ENCODE measurements at regions of chr11 and their contacts with region 1.

Region 1: DNA sequence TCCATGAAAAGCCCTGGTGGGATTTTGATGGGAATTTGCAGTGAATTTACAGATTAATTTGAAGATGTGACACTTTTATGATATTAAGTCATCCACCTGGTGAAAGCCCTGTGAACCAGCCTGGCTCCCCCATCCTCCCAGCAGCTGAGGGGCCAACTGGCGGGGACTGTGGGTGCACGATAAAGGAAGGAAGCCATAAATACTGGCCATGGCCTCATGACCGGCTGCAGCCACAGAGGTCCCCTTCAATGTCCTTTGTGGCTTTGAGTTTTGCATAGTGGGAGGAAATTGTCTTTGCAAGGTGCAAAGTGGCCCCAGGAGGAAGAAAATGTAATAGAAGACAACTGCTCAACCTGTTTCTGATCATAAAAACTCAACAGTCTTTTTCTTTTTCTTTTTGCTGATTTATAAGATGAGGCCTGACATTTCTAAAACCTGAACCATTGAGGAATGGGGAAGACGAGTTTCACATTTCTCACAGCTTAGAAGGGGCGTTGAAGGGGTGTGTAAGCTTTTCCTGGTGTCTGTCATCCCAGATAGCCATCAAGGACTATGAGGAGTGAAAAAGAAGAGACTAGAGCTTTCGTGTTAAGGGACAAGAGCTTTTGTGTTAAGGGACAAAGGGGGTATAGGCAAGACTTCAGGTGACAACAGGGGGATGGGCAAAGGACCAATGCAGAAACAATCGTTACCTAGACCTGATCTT is 6.3 kb upstream of the NDUFV1 start:
- DNase-seq: no peak
- ATAC-seq: peak; percentile 21 to 60 (median 53)
- H3K4me3 ChIP-seq: no peak overlapping the region
- H3K4me3 Mint-ChIP-seq: peak overlapping the region; percentile 85
- H3K27ac ChIP-seq: peak overlapping the region; percentile 42
- H3K27ac Mint-ChIP-seq: peak overlapping the region; percentile 81 to 85
- H3K4me1 ChIP-seq: peaks cover 24% of the 10 kb centered on the region
- H3K4me1 Mint-ChIP-seq: peaks cover 28% of the 10 kb centered on the region in 2 donors
- H3K27me3 ChIP-seq: no peaks in the 10 kb centered on the region
- H3K27me3 Mint-ChIP-seq: no peaks in the 10 kb centered on the region
- CTCF ChIP-seq: no peak

Region 2: GRCh38 chr11:67583247-67584204 is 17.0 kb before region 1 on chr11 and contains the start of gene GSTP1:
- intact Hi-C with region 1: loop called (anchors 2 kb)
- DNase-seq: peak; percentile 86 to 87
- ATAC-seq: peak; percentile 87 to 93 (median 88)
- H3K4me3 ChIP-seq: peak within 1 kb of the TSS; percentile 66
- H3K4me3 Mint-ChIP-seq: peak within 1 kb of the TSS; percentile 87
- H3K27ac ChIP-seq: peak within 1 kb of the TSS; percentile 80
- H3K27ac Mint-ChIP-seq: peak within 1 kb of the TSS; percentile 84 to 88
- H3K4me1 ChIP-seq: peaks cover 59% of the 10 kb centered on the region
- H3K4me1 Mint-ChIP-seq: peaks cover 51 to 74% of the 10 kb centered on the region in 2 donors
- H3K27me3 ChIP-seq: no peaks in the 10 kb centered on the region
- H3K27me3 Mint-ChIP-seq: no peaks in the 10 kb centered on the region
- CTCF ChIP-seq: peak; percentile 61
- total RNA-seq, gene GSTP1: 172 to 218 (median 212) TPM

Measured in natural killer cell (primary cell).